PC-9 (cell line): ENCODE measurements at regions of chr1 and their contacts with region 1.

Region 1: GRCh38 chr1:87794788-87795614 is 466.3 kb downstream of the LMO4 start:
- DNase-seq: peak; percentile 54 to 93
- H3K4me3 ChIP-seq: no peak overlapping the region
- H3K27ac ChIP-seq: peak overlapping the region; percentile 38
- H3K4me1 ChIP-seq: peaks cover 20% of the 10 kb centered on the region
- H3K27me3 ChIP-seq: no peaks in the 10 kb centered on the region
- CTCF ChIP-seq: no peak

Region 2: GRCh38 chr1:87805666-87806378 is 10.8 kb after region 1 on chr1:
- CTCF ChIA-PET with region 1: no interaction called
- POLR2A ChIA-PET with region 1: interaction called, 23 read pairs
- intact Hi-C with region 1: no loop called
- DNase-seq: peak; percentile 58 to 89
- H3K4me3 ChIP-seq: peak overlapping the region; percentile 27; the same call in 1 of the 2 replicates
- H3K27ac ChIP-seq: peak overlapping the region; percentile 29
- H3K4me1 ChIP-seq: peaks cover 22% of the 10 kb centered on the region
- H3K27me3 ChIP-seq: no peaks in the 10 kb centered on the region
- CTCF ChIP-seq: no peak

Region 3: GRCh38 chr1:87833166-87833565 is 38.2 kb after region 1 on chr1:
- CTCF ChIA-PET with region 1: no interaction called
- POLR2A ChIA-PET with region 1: no interaction called
- intact Hi-C with region 1: no loop called
- DNase-seq: no peak
- H3K4me3 ChIP-seq: no peak overlapping the region
- H3K27ac ChIP-seq: no peak overlapping the region
- H3K4me1 ChIP-seq: 0 out of 2 replicates have a peak, but pooled peaks cover 7% of the 10 kb centered on the region
- H3K27me3 ChIP-seq: no peaks in the 10 kb centered on the region
- CTCF ChIP-seq: no peak

Region 4: DNA sequence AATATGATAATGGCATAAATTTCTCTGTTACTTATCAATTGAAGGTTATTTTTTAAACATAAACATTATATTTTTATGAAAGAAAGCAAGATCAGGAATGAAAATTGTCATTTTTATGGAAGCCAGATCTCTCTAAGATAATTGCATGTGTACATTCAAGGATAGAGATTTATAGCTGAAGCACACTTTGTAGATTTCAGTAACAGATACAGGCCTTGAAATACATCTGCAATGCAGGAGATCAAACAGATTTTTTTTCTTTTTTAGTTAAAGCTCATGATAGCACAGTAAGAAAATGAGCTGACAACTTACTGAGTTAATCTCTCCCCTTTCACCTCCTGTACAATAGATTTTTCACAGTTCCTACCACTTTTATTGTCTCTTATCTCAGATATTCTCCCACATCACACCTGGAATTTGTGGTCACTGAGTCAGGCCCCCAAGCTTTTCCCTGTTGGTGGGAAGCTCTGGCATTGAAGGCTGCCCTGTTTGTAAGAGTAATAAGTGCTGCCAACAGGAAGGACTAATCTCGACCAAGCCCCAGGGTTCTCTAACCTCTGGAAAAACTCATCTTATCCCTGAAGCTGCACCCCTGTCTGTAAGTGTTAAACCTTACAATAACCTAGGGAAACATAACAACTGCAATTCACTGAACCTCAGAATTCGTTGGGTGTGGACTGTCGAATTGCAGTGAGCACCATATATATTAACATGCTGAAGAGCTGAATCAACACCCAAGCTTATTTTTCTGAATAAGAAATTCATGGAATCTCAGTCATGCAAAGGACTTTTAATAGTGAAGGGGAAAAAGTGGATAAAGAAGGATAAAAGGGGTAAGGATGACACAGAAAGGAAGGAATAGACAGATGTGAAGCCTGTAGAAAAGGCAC is 132.6 kb after region 1 on chr1:
- CTCF ChIA-PET with region 1: no interaction called
- POLR2A ChIA-PET with region 1: no interaction called
- intact Hi-C with region 1: loop called (anchors 10 kb)
- DNase-seq: peak; percentile 55 to 64
- H3K4me3 ChIP-seq: no peak overlapping the region
- H3K27ac ChIP-seq: no peak overlapping the region
- H3K4me1 ChIP-seq: peaks cover 13% of the 10 kb centered on the region; the same call in 1 of the 2 replicates
- H3K27me3 ChIP-seq: no peaks in the 10 kb centered on the region
- CTCF ChIP-seq: no peak

Region 5: DNA sequence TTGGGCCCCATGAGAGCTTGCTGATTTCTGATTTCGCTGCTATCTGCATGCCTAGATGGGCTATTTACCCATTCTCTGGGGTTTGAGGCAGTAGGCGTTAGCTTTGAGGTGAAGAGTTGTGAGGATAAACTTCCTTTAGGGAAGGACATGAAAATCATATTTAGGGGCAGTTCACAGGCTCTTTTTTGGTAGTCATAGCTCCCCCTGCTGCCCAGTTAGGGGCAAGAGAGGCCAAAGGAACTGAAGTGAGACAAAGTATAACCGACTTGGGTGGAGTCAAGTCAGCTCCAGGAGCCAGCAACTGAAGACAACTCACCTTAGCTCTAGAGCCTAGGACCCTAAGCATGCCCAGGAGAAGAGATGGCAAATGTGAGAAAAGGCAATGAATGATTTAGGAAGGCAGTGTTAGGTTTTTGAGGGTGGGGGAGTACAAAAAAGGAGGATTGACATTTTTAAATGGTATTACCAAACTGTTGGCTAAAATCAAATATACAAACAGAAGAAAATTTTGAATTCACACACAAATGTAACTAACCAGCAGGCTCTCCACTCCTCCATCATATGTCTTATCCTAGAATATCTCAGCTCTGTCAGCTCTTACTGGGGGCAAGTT is 158.8 kb after region 1 on chr1:
- CTCF ChIA-PET with region 1: interaction called, 4 read pairs
- POLR2A ChIA-PET with region 1: no interaction called
- intact Hi-C with region 1: loop called (anchors 1 kb)
- DNase-seq: peak; percentile 48 to 59
- H3K4me3 ChIP-seq: no peak overlapping the region
- H3K27ac ChIP-seq: no peak overlapping the region
- H3K4me1 ChIP-seq: no peaks in the 10 kb centered on the region
- H3K27me3 ChIP-seq: no peaks in the 10 kb centered on the region
- CTCF ChIP-seq: peak; percentile 93